GM12878 (cell line): ENCODE measurements at regions of chr10 and their contacts with region 1.

Region 1: DNA sequence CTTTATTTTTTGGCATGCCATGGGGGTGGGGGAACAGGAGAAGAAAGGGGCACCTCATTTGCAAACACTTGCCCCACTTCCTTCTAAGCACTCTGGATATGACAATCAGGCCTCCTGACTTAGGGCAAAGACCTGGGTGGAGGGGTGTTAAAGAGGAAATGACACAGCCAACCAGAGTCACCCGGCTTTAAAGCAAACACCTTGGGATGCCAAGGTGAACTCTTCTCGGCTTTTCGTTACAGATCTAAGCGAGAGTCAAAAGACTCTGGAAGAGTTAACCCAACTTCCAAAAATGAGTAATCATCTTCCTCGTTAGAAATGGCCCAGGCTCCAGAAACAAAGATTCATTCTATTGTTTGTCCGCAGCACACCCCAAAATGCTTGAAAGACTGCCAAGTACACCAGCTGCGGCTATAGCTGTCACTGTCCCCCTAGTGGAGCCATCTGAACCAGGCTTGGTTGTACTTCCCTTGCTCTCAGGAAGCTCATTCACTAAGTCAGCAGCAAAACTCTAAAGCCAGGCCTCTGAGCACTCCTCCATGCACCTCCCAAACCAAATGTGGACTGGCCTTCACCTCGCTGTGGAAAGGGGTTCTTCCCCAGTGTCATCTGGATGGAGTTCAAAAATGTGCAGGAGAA is 24.8 kb downstream of the FAM53B start:
- DNase-seq: peak; percentile 87
- ATAC-seq: peak; percentile 63
- H3K4me3 ChIP-seq: peak overlapping the region; percentile 57; the same call in 1 of the 2 replicates
- H3K27ac ChIP-seq: peak overlapping the region; percentile 71
- H3K4me1 ChIP-seq: peaks cover 69% of the 10 kb centered on the region
- H3K27me3 ChIP-seq: no peaks in the 10 kb centered on the region
- CTCF ChIP-seq: peak; percentile 56 to 72 (median 65)
- EP300 ChIP-seq: peak; percentile 75 to 88; a peak in 3 of 4 replicates
- POLR2A ChIP-seq: no peak
- RAD21 ChIP-seq: peak; percentile 65

Region 2: DNA sequence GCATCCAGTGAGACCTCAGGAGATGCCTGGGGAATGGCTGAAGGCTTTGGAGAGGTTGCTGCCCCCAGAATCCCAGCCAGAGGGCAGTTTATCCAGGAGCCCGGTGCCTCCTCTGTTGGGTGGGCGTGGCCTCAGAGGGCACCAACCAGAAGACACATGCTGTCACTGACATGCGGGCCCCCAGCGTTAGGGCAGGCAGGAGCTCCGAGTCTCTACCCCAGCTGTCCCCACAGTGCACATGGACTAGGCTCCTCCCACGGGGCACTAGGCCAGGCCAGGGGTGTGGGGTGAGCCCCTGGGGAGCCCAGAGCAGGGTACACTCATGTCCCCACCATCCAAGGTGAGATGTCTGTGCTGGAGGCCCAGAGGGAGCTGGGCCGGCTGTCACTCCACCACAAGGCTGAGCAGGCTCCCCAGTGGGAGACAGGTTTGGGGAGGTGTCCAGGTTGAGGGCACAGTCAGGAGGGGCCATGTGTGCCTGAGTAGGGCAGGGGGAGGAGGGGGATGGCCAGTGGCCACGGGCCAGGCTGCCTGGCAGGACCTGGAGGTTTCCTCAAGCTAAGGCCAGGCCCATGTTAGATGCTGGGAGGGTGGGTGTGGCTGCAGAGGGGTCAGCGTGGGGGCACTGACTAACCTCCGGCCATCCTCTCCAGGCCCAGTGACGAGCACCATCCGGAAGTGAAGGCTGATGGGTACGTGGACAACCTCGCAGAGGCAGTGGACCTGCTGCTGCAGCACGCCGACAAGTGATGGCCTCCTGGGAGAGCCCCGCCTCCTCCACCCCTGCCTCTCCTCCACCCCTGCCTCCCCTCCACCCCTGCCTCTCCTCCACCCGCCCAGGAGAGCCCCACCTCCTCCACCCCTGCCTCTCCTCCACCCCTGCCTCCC is 106.5 kb before region 1 on chr10:
- CTCF ChIA-PET with region 1: interaction called, 5 read pairs
- POLR2A ChIA-PET with region 1: no interaction called
- RAD21 ChIA-PET with region 1: interaction called, 3 read pairs
- SMC1A ChIA-PET with region 1: interaction called, 8 read pairs
- in situ Hi-C with region 1: no loop called
- intact Hi-C with region 1: loop called (anchors 1 kb)
- DNase-seq: no peak
- ATAC-seq: peak; percentile 8
- H3K4me3 ChIP-seq: no peak overlapping the region
- H3K27ac ChIP-seq: no peak overlapping the region
- H3K4me1 ChIP-seq: peaks cover 46% of the 10 kb centered on the region
- H3K27me3 ChIP-seq: no peaks in the 10 kb centered on the region
- CTCF ChIP-seq: no peak
- EP300 ChIP-seq: no peak
- POLR2A ChIP-seq: no peak
- RAD21 ChIP-seq: no peak

Region 3: DNA sequence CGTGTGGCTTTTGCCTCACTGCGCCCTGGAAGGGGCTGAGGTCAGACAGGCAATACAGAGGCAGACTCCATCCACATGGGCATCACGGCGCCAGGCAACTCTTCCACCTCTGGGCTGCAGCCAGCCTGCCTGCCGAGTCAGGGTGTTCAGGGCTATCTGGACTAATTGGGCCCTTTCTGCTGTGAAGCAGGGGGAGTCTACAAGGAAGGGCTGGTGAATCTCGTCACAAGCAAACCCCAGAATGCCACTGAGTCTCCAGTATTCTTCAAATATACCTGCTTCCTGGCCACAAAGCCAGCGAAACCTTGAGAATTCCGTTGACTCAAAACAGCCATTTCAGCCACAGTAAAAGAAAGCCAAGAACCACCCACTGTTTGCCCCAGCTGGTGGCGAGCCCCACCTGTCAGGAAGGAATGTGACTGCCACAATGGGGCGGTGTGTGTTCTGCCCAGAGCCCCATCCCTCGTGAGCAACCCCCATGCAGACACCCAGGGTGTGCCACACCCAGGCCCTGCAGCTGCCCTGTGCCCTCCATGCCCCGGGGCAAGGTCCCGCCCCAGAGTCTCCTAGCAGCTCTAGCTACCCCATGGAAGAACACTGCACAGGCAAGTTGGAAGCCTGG is 92.5 kb before region 1 on chr10:
- CTCF ChIA-PET with region 1: interaction called, 3 read pairs
- POLR2A ChIA-PET with region 1: no interaction called
- RAD21 ChIA-PET with region 1: interaction called, 12 read pairs
- SMC1A ChIA-PET with region 1: interaction called, 5 read pairs
- in situ Hi-C with region 1: no loop called
- intact Hi-C with region 1: loop called (anchors 5 kb)
- DNase-seq: peak; percentile 38
- ATAC-seq: peak; percentile 80
- H3K4me3 ChIP-seq: no peak overlapping the region
- H3K27ac ChIP-seq: no peak overlapping the region; the same call in 1 of the 2 replicates
- H3K4me1 ChIP-seq: peaks cover 25% of the 10 kb centered on the region
- H3K27me3 ChIP-seq: no peaks in the 10 kb centered on the region
- CTCF ChIP-seq: peak in 2 of 3 experiments; percentile 24 to 30; a peak in 4 of 6 replicates
- EP300 ChIP-seq: 0 out of 4 replicates have a peak, but pooled peaks of 1 of the 2 experiments have one; percentile 13
- POLR2A ChIP-seq: no peak
- RAD21 ChIP-seq: peak; percentile 21; the same call in 1 of the 2 replicates

Region 4: GRCh38 chr10:124688889-124689670 is 30.3 kb before region 1 on chr10:
- CTCF ChIA-PET with region 1: interaction called, 79 read pairs
- POLR2A ChIA-PET with region 1: interaction called, 139 read pairs
- RAD21 ChIA-PET with region 1: interaction called, 309 read pairs
- SMC1A ChIA-PET with region 1: interaction called, 334 read pairs
- in situ Hi-C with region 1: no loop called
- intact Hi-C with region 1: loop called (anchors 1 kb)
- DNase-seq: peak; percentile 93
- ATAC-seq: peak; percentile 96
- H3K4me3 ChIP-seq: no peak overlapping the region
- H3K27ac ChIP-seq: peak overlapping the region; percentile 56
- H3K4me1 ChIP-seq: peaks cover 53% of the 10 kb centered on the region
- H3K27me3 ChIP-seq: no peaks in the 10 kb centered on the region
- CTCF ChIP-seq: no peak
- EP300 ChIP-seq: peak; percentile 90 to 95
- POLR2A ChIP-seq: no peak
- RAD21 ChIP-seq: peak; percentile 31; the same call in 1 of the 2 replicates

Region 5: GRCh38 chr10:124703778-124704427 is 15.4 kb before region 1 on chr10:
- CTCF ChIA-PET with region 1: interaction called, 26 read pairs
- POLR2A ChIA-PET with region 1: interaction called, 54 read pairs
- RAD21 ChIA-PET with region 1: interaction called, 266 read pairs
- SMC1A ChIA-PET with region 1: interaction called, 38 read pairs
- in situ Hi-C with region 1: no loop called
- intact Hi-C with region 1: no loop called
- DNase-seq: no peak
- ATAC-seq: no peak
- H3K4me3 ChIP-seq: no peak overlapping the region
- H3K27ac ChIP-seq: no peak overlapping the region
- H3K4me1 ChIP-seq: peaks cover 30% of the 10 kb centered on the region
- H3K27me3 ChIP-seq: no peaks in the 10 kb centered on the region
- CTCF ChIP-seq: no peak
- EP300 ChIP-seq: no peak
- POLR2A ChIP-seq: no peak
- RAD21 ChIP-seq: no peak

Region 6: GRCh38 chr10:124732931-124733570 is 13.7 kb after region 1 on chr10:
- CTCF ChIA-PET with region 1: interaction called, 40 read pairs
- POLR2A ChIA-PET with region 1: interaction called, 31 read pairs
- RAD21 ChIA-PET with region 1: interaction called, 360 read pairs
- SMC1A ChIA-PET with region 1: interaction called, 351 read pairs
- in situ Hi-C with region 1: no loop called
- intact Hi-C with region 1: no loop called
- DNase-seq: peak; percentile 77
- ATAC-seq: peak; percentile 85
- H3K4me3 ChIP-seq: peak overlapping the region; percentile 50
- H3K27ac ChIP-seq: peak overlapping the region; percentile 71
- H3K4me1 ChIP-seq: peaks cover 69% of the 10 kb centered on the region
- H3K27me3 ChIP-seq: no peaks in the 10 kb centered on the region
- CTCF ChIP-seq: no peak
- EP300 ChIP-seq: no peak
- POLR2A ChIP-seq: peak; percentile 59
- RAD21 ChIP-seq: no peak

Region 7: DNA sequence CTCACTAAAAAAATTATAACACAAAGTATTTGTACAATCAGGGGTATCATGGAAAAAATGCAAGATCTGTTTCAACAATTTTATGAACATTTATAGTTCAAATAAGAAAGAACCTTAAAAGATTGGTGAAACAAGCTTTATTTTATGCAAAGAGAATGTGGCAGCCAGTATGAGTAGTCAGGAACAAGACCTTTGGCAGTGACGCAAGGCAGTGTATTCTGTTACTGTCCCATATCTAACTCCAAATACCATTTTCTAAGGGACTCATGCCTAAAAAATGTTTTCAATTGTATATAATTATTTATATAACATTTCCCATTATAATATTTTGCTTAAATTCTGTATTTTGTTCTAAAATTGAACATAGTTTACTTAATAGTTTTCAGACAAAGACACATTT is 43.9 kb after region 1 on chr10:
- CTCF ChIA-PET with region 1: no interaction called
- POLR2A ChIA-PET with region 1: no interaction called
- RAD21 ChIA-PET with region 1: no interaction called
- SMC1A ChIA-PET with region 1: no interaction called
- in situ Hi-C with region 1: no loop called
- intact Hi-C with region 1: no loop called
- DNase-seq: no peak
- ATAC-seq: no peak
- H3K4me3 ChIP-seq: no peak overlapping the region
- H3K27ac ChIP-seq: no peak overlapping the region
- H3K4me1 ChIP-seq: no peaks in the 10 kb centered on the region
- H3K27me3 ChIP-seq: no peaks in the 10 kb centered on the region
- CTCF ChIP-seq: no peak
- EP300 ChIP-seq: no peak
- POLR2A ChIP-seq: no peak
- RAD21 ChIP-seq: no peak